CD4-positive, alpha-beta T cell (primary cell): ENCODE measurements at regions of chr14 and their contacts with region 1.

Region 1: DNA sequence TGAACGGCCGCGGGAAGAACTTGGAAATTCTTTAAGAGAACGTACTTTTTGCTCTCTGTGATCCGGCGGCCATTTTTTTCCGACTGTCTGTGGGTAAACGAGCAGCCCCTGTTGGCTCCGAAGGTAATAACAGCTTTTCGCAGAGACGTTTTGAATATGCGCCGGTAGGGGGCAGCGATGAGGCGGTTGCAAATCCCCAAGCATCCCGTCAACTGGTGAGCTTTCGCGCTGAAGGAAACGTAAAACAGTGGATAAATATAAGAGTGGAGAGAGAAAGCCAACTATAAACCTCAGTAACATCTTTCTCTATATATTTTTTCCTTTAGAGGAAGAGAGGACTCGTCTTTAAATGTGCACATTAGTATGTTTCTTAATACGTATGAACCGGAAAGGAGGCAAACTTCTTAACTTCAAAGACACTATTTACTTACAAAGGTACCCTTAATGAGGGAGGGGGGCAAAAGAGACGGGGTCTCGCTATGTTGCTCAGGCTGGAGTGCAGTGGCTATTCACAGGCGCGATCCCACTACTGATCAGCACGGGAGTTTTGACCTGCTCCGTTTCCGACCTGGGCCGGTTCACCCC is 9.6 kb upstream of the NEMF start:
- DNase-seq: peak; percentile 74 to 94 (median 84)
- ATAC-seq: peak; percentile 33
- H3K4me3 ChIP-seq: peak overlapping the region; percentile 78
- H3K4me3 Mint-ChIP-seq: no peak overlapping the region
- H3K27ac ChIP-seq: peak overlapping the region; percentile 98
- H3K27ac Mint-ChIP-seq: no peak overlapping the region
- H3K4me1 ChIP-seq: peaks cover 43% of the 10 kb centered on the region
- H3K4me1 Mint-ChIP-seq: peaks cover 13% of the 10 kb centered on the region
- H3K27me3 ChIP-seq: no peaks in the 10 kb centered on the region
- H3K27me3 Mint-ChIP-seq: peaks cover 15% of the 10 kb centered on the region
- CTCF ChIP-seq: peak; percentile 100

Region 2: DNA sequence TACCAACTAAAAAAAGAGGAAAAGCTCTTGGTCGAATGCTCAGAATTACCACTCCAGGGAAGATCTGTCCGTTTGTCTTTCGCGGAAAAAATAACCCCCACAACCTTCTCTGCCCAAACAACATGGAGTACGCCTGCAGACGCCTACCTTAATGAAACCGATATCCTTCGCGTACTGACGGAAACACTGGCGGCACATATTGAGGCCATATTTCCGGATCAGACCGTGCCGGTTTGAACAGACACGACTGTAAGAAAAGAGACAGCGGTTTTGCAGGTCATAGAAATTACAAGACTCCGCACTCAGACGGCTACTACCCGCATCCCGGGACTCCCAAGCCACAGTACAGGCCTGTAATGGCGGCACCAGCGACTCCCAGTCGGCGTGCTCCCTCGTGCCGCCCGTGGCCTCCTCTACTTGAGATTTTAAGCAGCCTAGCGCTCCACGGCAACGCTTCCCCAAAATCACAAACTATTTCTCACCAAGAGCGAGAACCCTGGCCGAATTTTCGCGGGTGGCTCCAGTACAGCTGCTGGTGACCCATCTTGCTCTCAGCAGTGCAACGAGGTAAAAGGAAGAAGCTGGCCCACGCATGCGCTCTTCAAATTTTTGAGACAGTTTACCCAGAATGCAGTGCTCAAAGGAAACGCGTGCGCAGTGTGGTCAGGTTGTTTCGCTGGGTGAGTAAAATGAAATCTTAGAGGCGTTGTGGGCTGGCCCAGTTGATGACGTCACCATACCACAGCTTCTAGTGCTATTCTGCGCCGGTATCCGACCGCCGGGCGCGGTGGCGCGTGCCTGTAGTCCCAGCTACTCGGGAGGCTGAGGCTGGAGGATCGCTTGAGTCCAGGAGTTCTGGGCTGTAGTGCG is 276.1 kb before region 1 on chr14 and contains the start of gene RPS29:
- CTCF ChIA-PET with region 1: interaction called, 3 read pairs
- POLR2A ChIA-PET with region 1: interaction called, 21 read pairs
- intact Hi-C with region 1: no loop called
- DNase-seq: peak; percentile 95 to 100 (median 98)
- ATAC-seq: peak; percentile 77
- H3K4me3 ChIP-seq: peak within 1 kb of the TSS; percentile 89
- H3K4me3 Mint-ChIP-seq: peak within 1 kb of the TSS; percentile 90
- H3K27ac ChIP-seq: peak within 1 kb of the TSS; percentile 93 to 95
- H3K27ac Mint-ChIP-seq: peak within 1 kb of the TSS; percentile 99
- H3K4me1 ChIP-seq: peaks cover 33% of the 10 kb centered on the region
- H3K4me1 Mint-ChIP-seq: peaks cover 52% of the 10 kb centered on the region
- H3K27me3 ChIP-seq: no peaks in the 10 kb centered on the region
- H3K27me3 Mint-ChIP-seq: peaks cover 10% of the 10 kb centered on the region
- CTCF ChIP-seq: no peak
- total RNA-seq, gene RPS29: 3,356 to 3,996 TPM

Region 3: DNA sequence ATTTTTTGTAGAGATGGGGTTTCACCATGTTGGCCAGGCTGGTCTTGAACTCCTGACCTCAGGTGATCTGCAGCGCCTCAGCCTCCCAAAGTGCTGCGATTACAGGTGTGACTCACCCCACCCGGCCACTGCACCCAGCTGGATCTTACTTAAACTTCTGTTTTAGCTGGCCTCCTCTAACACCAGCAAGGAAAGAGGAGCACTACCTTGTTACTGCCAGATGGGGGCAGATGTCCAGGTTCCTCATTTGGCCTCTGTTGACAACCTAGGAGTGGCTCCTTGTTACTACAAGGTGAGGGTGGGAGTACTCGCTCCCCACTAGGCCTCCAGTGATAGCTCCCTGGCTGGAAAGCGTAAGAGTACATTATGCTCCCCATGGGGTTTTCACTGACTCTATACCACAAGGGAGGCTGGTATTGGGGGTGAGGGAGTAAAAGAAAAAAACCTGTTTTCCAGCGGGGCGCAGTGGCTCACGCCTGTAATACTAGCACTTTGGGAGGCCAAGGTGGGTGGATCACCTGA is 17.6 kb after region 1 on chr14:
- CTCF ChIA-PET with region 1: interaction called, 13 read pairs
- POLR2A ChIA-PET with region 1: interaction called, 19 read pairs
- intact Hi-C with region 1: no loop called
- DNase-seq: peak; percentile 22 to 86 (median 38)
- ATAC-seq: peak; percentile 94
- H3K4me3 ChIP-seq: no peak overlapping the region
- H3K4me3 Mint-ChIP-seq: no peak overlapping the region
- H3K27ac ChIP-seq: no peak overlapping the region
- H3K27ac Mint-ChIP-seq: peak overlapping the region; percentile 64
- H3K4me1 ChIP-seq: peaks cover 17% of the 10 kb centered on the region
- H3K4me1 Mint-ChIP-seq: peaks cover 18% of the 10 kb centered on the region
- H3K27me3 ChIP-seq: no peaks in the 10 kb centered on the region
- H3K27me3 Mint-ChIP-seq: no peaks in the 10 kb centered on the region
- CTCF ChIP-seq: peak; percentile 46

Region 4: DNA sequence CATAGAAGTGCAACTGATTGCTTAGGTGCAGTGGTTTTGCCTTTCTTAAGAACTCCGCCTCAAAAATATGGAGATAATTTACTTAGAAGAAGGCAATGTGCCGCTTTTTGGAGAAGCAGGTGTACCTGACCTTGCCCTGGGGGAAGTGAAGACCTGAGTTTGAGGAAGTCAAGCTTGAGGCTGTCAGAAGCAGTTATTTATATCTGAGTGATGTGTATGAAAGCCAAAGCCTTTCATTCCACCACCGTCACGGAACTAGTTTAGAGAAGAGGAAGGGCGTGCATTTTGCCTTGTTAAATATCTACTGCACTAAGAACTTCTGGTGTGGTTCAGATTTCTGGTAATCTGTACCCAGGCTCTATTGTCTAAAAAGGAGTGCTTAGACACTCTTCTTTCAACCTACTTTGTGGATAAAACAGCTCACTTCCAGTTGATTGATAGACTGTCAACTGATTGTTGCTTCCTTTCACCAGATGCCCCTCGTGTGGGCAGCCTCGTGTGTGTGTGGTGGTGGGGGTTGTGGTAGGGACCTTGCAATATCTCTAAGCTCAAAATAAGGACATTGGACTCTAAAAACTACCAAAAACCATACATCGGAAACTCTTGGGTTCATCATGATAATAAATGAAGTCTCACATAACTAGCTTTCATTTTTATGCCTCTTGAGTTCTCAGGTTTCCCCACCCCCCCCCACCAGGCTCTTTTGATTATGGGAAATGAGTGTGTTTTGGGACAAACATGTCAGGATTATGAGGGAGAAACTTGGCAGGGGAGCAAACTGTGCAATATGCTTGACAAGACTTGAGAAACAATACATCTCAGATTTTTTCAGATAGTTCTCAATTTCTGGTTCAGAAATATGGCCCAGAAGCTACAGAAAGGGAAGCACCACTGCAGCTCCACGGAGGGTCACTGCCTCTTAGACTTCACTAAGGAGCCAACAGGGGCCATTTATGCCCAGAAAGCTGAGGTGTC is 109.3 kb after region 1 on chr14:
- CTCF ChIA-PET with region 1: interaction called, 11 read pairs
- POLR2A ChIA-PET with region 1: interaction called, 86 read pairs
- intact Hi-C with region 1: loop called in 1 of 2 experiments (anchors 2 kb)
- DNase-seq: peak in 13 of 14 experiments; percentile 16 to 87 (median 55)
- ATAC-seq: peak; percentile 84
- H3K4me3 ChIP-seq: peak overlapping the region; percentile 30
- H3K4me3 Mint-ChIP-seq: peak overlapping the region; percentile 50
- H3K27ac ChIP-seq: peak overlapping the region; percentile 80 to 85
- H3K27ac Mint-ChIP-seq: peak overlapping the region; percentile 90
- H3K4me1 ChIP-seq: peaks cover 66% of the 10 kb centered on the region
- H3K4me1 Mint-ChIP-seq: peaks cover 59% of the 10 kb centered on the region
- H3K27me3 ChIP-seq: no peaks in the 10 kb centered on the region
- H3K27me3 Mint-ChIP-seq: no peaks in the 10 kb centered on the region
- CTCF ChIP-seq: no peak

Region 5: DNA sequence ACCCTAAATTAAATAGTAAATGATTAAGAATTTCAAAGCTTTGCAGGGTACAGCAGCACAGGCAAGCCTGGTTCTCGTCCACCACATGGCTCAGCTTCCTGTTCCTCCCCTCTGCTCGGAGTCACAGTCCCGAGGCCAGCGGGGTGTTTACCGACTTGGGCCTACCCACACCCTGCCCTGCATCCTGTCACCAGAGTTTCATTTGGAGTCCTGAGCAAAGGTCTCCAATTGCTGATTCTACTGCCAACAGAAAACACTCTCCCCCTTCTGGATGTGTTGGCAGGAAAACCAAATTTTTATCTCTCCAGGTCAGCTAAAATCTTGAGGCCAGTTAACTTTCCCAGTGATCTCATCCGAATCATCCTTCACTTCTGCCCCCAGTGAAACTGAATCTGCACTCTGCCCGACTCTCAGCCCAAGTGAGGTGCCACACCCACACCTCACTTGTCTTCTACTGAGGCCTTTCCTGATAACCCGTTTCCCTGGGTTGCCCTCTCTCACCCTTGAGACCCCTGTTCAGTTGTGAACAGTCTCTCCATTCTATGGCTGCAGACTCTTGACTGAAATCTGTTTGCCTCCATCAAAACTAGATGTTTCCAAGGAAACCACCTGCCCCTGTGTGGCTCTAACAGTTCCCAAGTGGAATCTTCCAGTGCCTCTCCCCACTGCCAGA is 183.0 kb after region 1 on chr14:
- CTCF ChIA-PET with region 1: interaction called, 4 read pairs
- POLR2A ChIA-PET with region 1: interaction called, 30 read pairs
- intact Hi-C with region 1: loop called in 1 of 2 experiments (anchors 5 kb)
- DNase-seq: peak; percentile 35 to 93 (median 72)
- ATAC-seq: peak; percentile 67
- H3K4me3 ChIP-seq: no peak overlapping the region
- H3K4me3 Mint-ChIP-seq: peak overlapping the region; percentile 43
- H3K27ac ChIP-seq: peak overlapping the region; percentile 48 to 78
- H3K27ac Mint-ChIP-seq: peak overlapping the region; percentile 89
- H3K4me1 ChIP-seq: peaks cover 72% of the 10 kb centered on the region
- H3K4me1 Mint-ChIP-seq: peaks cover 65% of the 10 kb centered on the region
- H3K27me3 ChIP-seq: no peaks in the 10 kb centered on the region
- H3K27me3 Mint-ChIP-seq: no peaks in the 10 kb centered on the region
- CTCF ChIP-seq: no peak

Region 6: GRCh38 chr14:50109342-50109741 is 247.2 kb after region 1 on chr14:
- CTCF ChIA-PET with region 1: interaction called, 11 read pairs
- POLR2A ChIA-PET with region 1: interaction called, 61 read pairs
- intact Hi-C with region 1: loop called in 1 of 2 experiments (anchors 1 kb)
- DNase-seq: no peak
- ATAC-seq: no peak
- H3K4me3 ChIP-seq: no peak overlapping the region
- H3K4me3 Mint-ChIP-seq: no peak overlapping the region
- H3K27ac ChIP-seq: no peak overlapping the region
- H3K27ac Mint-ChIP-seq: no peak overlapping the region
- H3K4me1 ChIP-seq: peaks cover under 1% of the 10 kb centered on the region
- H3K4me1 Mint-ChIP-seq: peaks cover 30% of the 10 kb centered on the region
- H3K27me3 ChIP-seq: no peaks in the 10 kb centered on the region
- H3K27me3 Mint-ChIP-seq: no peaks in the 10 kb centered on the region
- CTCF ChIP-seq: no peak

Region 7: GRCh38 chr14:50260511-50260910 is 398.3 kb after region 1 on chr14:
- CTCF ChIA-PET with region 1: no interaction called
- POLR2A ChIA-PET with region 1: no interaction called
- intact Hi-C with region 1: no loop called
- DNase-seq: peak in 5 of 14 experiments; percentile 6 to 59 (median 53)
- ATAC-seq: peak; percentile 52
- H3K4me3 ChIP-seq: no peak overlapping the region
- H3K4me3 Mint-ChIP-seq: no peak overlapping the region
- H3K27ac ChIP-seq: no peak overlapping the region
- H3K27ac Mint-ChIP-seq: no peak overlapping the region
- H3K4me1 ChIP-seq: no peaks in the 10 kb centered on the region
- H3K4me1 Mint-ChIP-seq: no peaks in the 10 kb centered on the region
- H3K27me3 ChIP-seq: no peaks in the 10 kb centered on the region
- H3K27me3 Mint-ChIP-seq: no peaks in the 10 kb centered on the region
- CTCF ChIP-seq: peak; percentile 53